ENCODE measurements at regions of chr12 and their contacts with region 1.

Region 1: DNA sequence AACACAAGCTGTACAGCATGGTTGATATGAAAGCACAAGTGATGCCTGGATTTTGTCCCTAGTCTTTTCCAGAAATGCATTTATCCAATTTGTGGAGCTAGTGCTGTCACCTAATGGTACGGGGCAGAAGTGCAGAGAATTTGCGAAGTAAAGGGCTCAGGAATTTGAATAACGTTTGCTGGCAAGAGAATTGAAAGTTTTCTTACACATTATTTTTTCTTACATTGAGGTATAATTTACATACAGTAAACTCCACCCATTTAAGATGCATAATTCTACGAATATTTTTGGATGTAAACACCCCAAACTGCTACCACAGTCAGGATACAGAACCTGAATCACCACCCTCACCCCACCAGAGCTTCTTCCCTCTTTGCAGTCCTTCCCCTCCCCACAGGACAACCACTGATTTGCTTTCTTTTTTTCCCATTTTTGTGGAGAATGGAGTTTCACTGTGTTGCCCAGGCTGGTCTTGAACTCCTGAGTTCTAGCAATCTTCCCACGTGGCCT is 3.5 kb downstream of the AICDA start:
- DNase-seq: no peak
- H3K4me3 ChIP-seq: no peak overlapping the region
- H3K27ac ChIP-seq: no peak overlapping the region
- H3K4me1 ChIP-seq: no peaks in the 10 kb centered on the region
- H3K27me3 ChIP-seq: no peaks in the 10 kb centered on the region
- CTCF ChIP-seq: peak; percentile 22 to 79 (median 76)

Region 2: DNA sequence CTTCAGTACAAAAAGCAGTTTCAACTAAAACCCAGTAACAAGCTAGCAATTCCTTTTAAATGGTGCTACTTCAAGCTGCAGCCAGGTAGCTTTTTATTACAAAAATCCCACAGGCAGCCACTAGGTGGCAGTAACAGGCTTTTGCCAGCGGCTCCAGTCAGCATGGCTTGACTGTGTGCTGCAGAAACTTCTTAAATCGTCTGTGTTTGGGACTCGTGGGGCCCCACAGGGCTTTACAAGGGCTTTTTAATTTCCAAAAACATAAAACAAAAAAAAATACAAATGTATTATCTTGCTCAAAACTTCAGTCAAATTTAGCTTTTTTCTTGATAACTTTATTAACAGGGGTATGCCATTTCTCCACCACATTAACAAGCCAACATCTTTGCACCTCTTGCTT is 64.8 kb before region 1 on chr12:
- intact Hi-C with region 1: loop called (anchors 2 kb)
- DNase-seq: peak in 1 of 2 donors; percentile 74
- H3K4me3 ChIP-seq: no peak overlapping the region
- H3K27ac ChIP-seq: no peak overlapping the region
- H3K4me1 ChIP-seq: no peaks in the 10 kb centered on the region
- H3K27me3 ChIP-seq: no peaks in the 10 kb centered on the region
- CTCF ChIP-seq: peak; percentile 68 to 97 (median 86)

Measured in ascending aorta (tissue), 2 donors.